Activated CD4-positive, alpha-beta T cell treated with anti-CD3 and anti-CD28 coated beads, Interleukin-2, amount 10 ng/mL, durations not matched to agents 24 days and 14 days (primary cell): ENCODE measurements at regions of chr1 and their contacts with region 1.

Region 1: DNA sequence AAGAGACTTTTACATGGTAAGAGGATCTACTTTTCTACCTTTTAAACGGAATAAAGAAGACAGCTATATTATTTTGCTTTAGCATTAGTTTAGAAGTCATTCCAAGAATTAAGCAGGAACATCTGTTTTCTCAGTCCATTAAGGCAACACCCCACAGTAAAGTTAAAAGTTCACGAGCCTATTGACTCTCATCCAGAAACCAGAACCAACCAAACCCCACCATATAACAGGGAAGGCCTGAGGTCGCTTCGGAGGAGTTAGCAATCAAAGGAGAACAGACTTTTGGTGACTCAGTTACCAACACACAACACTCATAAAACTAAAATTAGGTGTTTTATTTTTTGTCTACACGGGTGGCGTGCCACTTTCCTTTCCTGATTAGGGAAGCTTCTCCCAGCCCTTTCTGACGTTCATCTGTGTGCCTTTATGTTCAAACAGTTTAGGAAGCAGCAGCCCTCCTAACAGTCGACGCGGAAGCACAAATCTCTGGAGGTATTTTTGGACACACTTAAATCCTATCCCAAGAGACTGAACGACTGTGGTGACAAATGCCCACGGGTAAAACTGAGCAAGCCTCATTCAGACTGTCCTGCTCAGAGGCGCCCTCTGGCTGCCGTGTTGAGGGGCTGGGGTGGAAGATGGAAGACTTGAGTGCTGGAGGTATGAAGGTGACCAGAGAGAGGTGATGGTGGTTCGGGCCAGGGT is 8.6 kb upstream of the PLA2G2C start:
- DNase-seq: peak; percentile 93
- H3K4me3 Mint-ChIP-seq: no peak overlapping the region
- H3K27ac Mint-ChIP-seq: no peak overlapping the region
- H3K4me1 Mint-ChIP-seq: peaks cover 6% of the 10 kb centered on the region
- H3K27me3 Mint-ChIP-seq: peaks cover 45% of the 10 kb centered on the region

Region 2: DNA sequence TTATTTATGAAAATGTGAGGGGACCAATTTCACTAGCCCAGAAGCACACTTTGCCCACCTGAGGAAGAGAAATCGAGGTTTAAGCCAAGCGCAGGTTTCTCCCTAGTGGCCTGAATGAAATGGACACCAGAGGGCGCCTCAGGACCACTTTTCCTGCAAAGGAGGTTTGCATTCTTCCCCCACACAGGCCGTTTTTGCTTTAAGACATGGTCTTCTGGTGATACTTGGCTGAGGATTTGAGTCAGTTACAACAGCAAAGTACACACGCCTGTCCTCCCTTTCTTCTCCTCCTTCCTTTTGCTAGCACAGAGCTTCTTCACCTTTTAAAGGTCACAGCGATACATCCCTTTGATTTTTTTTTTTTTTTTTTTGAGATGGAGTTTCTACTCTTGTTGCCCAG is 276.9 kb before region 1 on chr1:
- intact Hi-C with region 1: loop called (anchors 2 kb)
- DNase-seq: peak; percentile 93
- H3K4me3 Mint-ChIP-seq: no peak overlapping the region
- H3K27ac Mint-ChIP-seq: no peak overlapping the region
- H3K4me1 Mint-ChIP-seq: peaks cover 5% of the 10 kb centered on the region
- H3K27me3 Mint-ChIP-seq: no peaks in the 10 kb centered on the region